HCT116 (cell line): ENCODE measurements at regions of chr18 and their contacts with region 1.

Region 1: DNA sequence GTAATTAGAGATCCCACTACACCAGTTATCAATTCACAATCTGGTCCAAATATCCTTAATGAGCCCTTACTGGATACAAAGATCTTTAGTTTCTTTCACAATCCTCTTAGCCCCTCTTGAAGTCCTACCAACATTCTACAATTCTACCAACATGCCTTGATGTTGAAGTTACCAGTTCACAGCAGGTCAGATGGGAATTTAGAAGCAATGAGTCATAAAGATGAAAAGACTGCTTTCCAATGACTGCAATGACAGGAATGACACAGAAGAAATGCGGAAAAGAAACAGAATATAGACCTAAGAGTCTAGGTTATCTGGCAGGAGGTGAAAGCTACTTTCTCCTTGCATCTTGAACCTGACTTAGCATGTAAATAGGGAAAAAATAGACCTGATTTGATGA is 24.5 kb downstream of the RTTN start:
- DNase-seq: peak; percentile 94
- ATAC-seq: peak; percentile 88
- H3K4me3 ChIP-seq: peak overlapping the region in 1 of 2 experiments; percentile 25; a peak in 2 of 4 replicates
- H3K27ac ChIP-seq: peak overlapping the region; percentile 97
- H3K4me1 ChIP-seq: peaks cover 55 to 65% of the 10 kb centered on the region in 2 experiments
- H3K27me3 ChIP-seq: no peaks in the 10 kb centered on the region
- CTCF ChIP-seq: no peak
- POLR2A ChIP-seq: no peak
- RAD21 ChIP-seq: 0 out of 2 replicates have a peak, but pooled peaks have one; percentile 31

Region 2: DNA sequence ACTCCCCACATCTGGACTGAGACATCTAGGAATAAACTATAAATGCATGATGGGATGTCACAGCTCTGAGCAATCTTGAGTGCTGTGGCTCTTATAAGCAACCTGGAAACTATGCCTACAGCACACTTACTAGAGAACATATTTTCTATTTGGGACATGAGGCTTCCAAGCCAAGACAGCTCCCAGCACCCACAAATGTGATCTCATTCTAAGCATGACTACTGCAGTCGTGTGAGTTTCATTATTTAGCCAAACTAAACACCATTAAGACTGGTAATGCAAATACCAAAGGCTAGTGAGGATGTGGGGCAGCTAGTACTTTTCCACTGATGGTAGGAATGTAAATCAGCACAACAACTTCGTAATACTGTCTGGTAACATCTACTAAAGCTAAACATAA is 48.0 kb before region 1 on chr18:
- CTCF ChIA-PET with region 1: no interaction called
- POLR2A ChIA-PET with region 1: no interaction called
- RAD21 ChIA-PET with region 1: no interaction called
- intact Hi-C with region 1: no loop called
- DNase-seq: no peak
- ATAC-seq: no peak
- H3K4me3 ChIP-seq: no peak overlapping the region
- H3K27ac ChIP-seq: no peak overlapping the region
- H3K4me1 ChIP-seq: 0 out of 4 replicates have a peak, but pooled peaks cover 0 to 2% of the 10 kb centered on the region in 2 experiments
- H3K27me3 ChIP-seq: no peaks in the 10 kb centered on the region
- CTCF ChIP-seq: no peak
- POLR2A ChIP-seq: no peak
- RAD21 ChIP-seq: no peak

Region 3: DNA sequence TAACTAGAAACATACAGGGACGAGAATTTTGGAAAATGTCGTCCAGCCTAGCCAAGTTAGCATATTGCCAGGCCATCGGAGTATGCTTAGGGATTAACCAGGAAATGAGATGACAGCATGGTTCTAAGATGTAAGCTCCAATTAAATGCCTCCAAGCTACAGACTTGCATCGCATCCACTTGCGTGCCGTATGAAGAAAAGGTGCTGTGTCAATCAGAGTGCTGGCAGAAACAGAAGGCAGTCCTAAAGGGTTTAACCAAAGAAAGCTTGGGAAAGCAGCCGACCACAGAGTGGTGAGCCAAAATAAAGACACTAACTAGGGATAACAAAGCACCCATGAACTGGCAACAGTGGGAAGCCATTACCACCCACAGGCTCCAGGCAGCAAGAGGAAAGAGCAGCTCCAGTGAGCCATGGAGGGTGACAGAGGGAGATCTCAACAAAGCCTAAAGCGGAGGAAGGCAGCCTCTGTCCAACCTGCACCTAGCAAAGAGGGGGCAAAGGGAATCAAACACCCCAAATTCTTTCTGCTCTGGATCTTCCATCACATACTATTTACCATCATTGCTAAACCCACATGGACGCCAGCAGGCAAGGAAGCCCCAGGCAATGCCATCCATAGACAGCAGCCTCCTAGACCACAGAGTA is 80.2 kb after region 1 on chr18:
- CTCF ChIA-PET with region 1: no interaction called
- POLR2A ChIA-PET with region 1: no interaction called
- RAD21 ChIA-PET with region 1: no interaction called
- intact Hi-C with region 1: no loop called
- DNase-seq: no peak
- ATAC-seq: no peak
- H3K4me3 ChIP-seq: no peak overlapping the region
- H3K27ac ChIP-seq: no peak overlapping the region
- H3K4me1 ChIP-seq: no peaks in the 10 kb centered on the region
- H3K27me3 ChIP-seq: no peaks in the 10 kb centered on the region
- CTCF ChIP-seq: no peak
- POLR2A ChIP-seq: no peak
- RAD21 ChIP-seq: no peak

Region 4: DNA sequence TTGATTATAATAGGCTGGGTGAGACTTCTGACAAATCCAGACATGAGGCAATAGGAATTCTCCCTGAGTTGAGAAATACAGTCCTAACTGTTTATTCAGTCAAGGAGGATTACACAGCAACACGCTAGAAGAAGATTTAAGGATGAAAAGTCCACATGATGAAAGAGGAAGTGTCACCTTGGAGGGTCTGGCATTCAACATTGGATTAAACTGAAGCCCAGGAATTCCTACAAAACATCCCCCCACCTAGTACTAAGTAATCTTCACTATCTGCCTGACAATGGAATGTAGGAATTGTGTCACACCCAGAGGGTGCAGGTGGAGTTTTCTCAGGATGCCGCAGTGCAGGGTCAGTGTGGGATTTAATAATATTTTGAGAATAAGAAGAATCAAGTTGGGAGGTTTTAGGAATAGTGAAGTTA is 250.2 kb after region 1 on chr18:
- CTCF ChIA-PET with region 1: interaction called, 4 read pairs
- POLR2A ChIA-PET with region 1: no interaction called
- RAD21 ChIA-PET with region 1: no interaction called
- intact Hi-C with region 1: loop called (anchors 5 kb)
- DNase-seq: no peak
- ATAC-seq: no peak
- H3K4me3 ChIP-seq: no peak overlapping the region
- H3K27ac ChIP-seq: peak overlapping the region; percentile 38
- H3K4me1 ChIP-seq: peaks cover 24 to 42% of the 10 kb centered on the region in 2 experiments
- H3K27me3 ChIP-seq: no peaks in the 10 kb centered on the region
- CTCF ChIP-seq: no peak
- POLR2A ChIP-seq: no peak
- RAD21 ChIP-seq: no peak

Region 5: GRCh38 chr18:70659036-70659925 is 478.3 kb after region 1 on chr18:
- CTCF ChIA-PET with region 1: no interaction called
- POLR2A ChIA-PET with region 1: no interaction called
- RAD21 ChIA-PET with region 1: no interaction called
- intact Hi-C with region 1: no loop called
- DNase-seq: no peak
- ATAC-seq: no peak
- H3K4me3 ChIP-seq: no peak overlapping the region
- H3K27ac ChIP-seq: no peak overlapping the region
- H3K4me1 ChIP-seq: no peaks in the 10 kb centered on the region
- H3K27me3 ChIP-seq: 0 out of 2 replicates have a peak, but pooled peaks cover 3% of the 10 kb centered on the region
- CTCF ChIP-seq: no peak
- POLR2A ChIP-seq: no peak
- RAD21 ChIP-seq: no peak